Heart left ventricle (tissue), 16 donors: ENCODE measurements at regions of chr7 and their contacts with region 1.

Region 1: GRCh38 chr7:114879554-114879953 is 42.3 kb upstream of the MDFIC start:
- DNase-seq: no peak
- ATAC-seq: no peak
- H3K4me3 ChIP-seq: no peak overlapping the region
- H3K27ac ChIP-seq: no peak overlapping the region
- H3K4me1 ChIP-seq: no peaks in the 10 kb centered on the region
- H3K27me3 ChIP-seq: no peaks in the 10 kb centered on the region
- CTCF ChIP-seq: no peak
- POLR2A ChIP-seq: no peak

Region 2: GRCh38 chr7:114843102-114843501 is 36.5 kb before region 1 on chr7:
- intact Hi-C with region 1: no loop called
- DNase-seq: no peak
- ATAC-seq: no peak
- H3K4me3 ChIP-seq: no peak overlapping the region
- H3K27ac ChIP-seq: no peak overlapping the region
- H3K4me1 ChIP-seq: no peaks in the 10 kb centered on the region
- H3K27me3 ChIP-seq: no peaks in the 10 kb centered on the region
- CTCF ChIP-seq: no peak
- POLR2A ChIP-seq: no peak

Region 3: GRCh38 chr7:114916261-114916892 is 36.8 kb after region 1 on chr7:
- intact Hi-C with region 1: loop called in 1 of 10 experiments (anchors 5 kb)
- DNase-seq: no peak
- ATAC-seq: no peak
- H3K4me3 ChIP-seq: no peak overlapping the region
- H3K27ac ChIP-seq: peak overlapping the region in 1 of 12 donors; percentile 62
- H3K4me1 ChIP-seq: no peaks in the 10 kb centered on the region
- H3K27me3 ChIP-seq: no peaks in the 10 kb centered on the region
- CTCF ChIP-seq: no peak
- POLR2A ChIP-seq: no peak

Region 4: DNA sequence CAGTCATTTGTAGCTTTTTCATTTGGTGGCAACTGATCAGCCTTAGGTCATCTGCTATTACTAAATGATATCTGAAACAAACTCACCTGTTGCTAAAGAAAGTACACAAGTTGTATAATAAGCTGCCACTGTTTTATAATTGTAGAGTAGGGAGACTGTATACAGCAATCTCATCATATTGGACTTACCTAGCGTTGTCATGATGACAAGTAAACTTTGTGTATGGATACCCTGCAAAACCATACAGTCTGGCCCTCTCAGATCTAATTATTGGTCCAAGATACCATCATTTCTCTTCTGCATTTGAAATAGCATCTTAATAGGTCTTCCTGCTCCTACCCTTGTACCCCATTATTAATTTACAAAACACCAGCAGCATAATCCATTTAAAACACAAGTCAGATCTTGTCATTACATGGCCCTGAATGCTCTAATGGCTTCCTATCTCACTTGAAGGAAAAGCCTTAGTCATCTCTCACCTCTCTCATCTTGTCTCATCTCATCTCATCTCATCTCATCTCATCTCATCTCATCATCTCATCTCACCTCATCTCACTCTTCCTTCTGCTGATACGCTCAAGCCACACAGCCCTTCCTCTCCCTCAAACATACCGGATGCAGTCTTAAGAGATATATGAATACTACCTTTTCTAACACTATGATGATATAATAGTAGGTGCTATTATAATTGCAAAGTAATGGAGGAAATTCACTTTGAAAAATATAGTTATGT is 582.9 kb after region 1 on chr7:
- intact Hi-C with region 1: no loop called
- DNase-seq: no peak
- ATAC-seq: no peak
- H3K4me3 ChIP-seq: no peak overlapping the region
- H3K27ac ChIP-seq: no peak overlapping the region
- H3K4me1 ChIP-seq: no peaks in the 10 kb centered on the region
- H3K27me3 ChIP-seq: peaks cover 0 to 4% (median 0%) of the 10 kb centered on the region in 9 donors
- CTCF ChIP-seq: no peak
- POLR2A ChIP-seq: no peak